Naive thymus-derived CD4-positive, alpha-beta T cell (primary cell): ENCODE measurements at regions of chr3 and their contacts with region 1.

Region 1: DNA sequence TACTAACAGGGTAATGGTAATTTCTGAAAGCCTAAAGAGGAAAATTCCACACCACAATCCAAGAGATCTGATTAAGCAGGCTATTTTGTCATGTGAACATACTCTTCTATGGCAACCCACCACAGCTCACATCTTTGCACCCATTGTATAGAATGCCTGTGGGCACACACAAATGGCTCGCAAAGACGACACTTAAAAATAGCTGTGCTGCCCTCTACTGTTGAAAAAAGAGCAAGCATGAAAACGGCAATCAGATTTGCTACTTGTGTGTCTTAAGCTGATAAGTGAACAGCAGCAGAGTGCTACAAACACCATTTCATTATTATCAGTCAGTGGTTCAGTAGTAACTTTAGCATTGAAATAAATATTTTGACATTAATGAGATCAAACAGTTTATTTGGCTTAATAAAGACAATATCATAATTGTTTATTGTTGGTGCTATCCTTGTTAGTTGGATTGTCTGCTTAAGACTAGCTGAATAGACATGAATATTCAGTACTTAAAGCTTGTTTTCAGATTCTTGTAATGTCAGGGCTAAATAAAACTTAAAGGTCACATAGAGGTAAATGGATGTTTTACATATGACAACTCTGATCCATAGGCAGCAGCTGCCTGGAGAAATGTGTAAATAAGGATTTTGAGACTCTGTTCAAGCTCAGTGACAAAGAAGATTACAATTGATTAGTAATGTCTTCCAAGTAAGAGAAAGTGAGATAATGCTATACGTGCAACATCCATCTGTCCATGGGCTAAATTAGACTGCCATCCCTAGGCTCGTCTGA is 199.1 kb downstream of the LRRN1 start:
- DNase-seq: peak in 5 of 9 donors; percentile 11 to 39 (median 24)
- ATAC-seq: peak; percentile 46
- H3K4me3 ChIP-seq: no peak overlapping the region
- H3K4me3 Mint-ChIP-seq: no peak overlapping the region
- H3K27ac ChIP-seq: no peak overlapping the region
- H3K27ac Mint-ChIP-seq: no peak overlapping the region
- H3K4me1 ChIP-seq: no peaks in the 10 kb centered on the region
- H3K4me1 Mint-ChIP-seq: no peaks in the 10 kb centered on the region
- H3K27me3 ChIP-seq: no peaks in the 10 kb centered on the region
- H3K27me3 Mint-ChIP-seq: peaks cover 0 to 3% (median 0%) of the 10 kb centered on the region in 5 donors

Region 2: GRCh38 chr3:3200632-3201212 is 797.6 kb before region 1 on chr3:
- CTCF ChIA-PET with region 1: interaction called, 28 read pairs
- POLR2A ChIA-PET with region 1: interaction called, 3 read pairs
- intact Hi-C with region 1: no loop called
- DNase-seq: peak in 5 of 9 donors; percentile 7 to 39 (median 28)
- ATAC-seq: peak; percentile 71
- H3K4me3 ChIP-seq: no peak overlapping the region
- H3K4me3 Mint-ChIP-seq: peak overlapping the region in 6 of 10 donors; percentile 36 to 76 (median 51)
- H3K27ac ChIP-seq: no peak overlapping the region
- H3K27ac Mint-ChIP-seq: peak overlapping the region in 1 of 9 donors; percentile 58
- H3K4me1 ChIP-seq: no peaks in the 10 kb centered on the region
- H3K4me1 Mint-ChIP-seq: peaks cover 8 to 27% (median 19%) of the 10 kb centered on the region in 7 donors
- H3K27me3 ChIP-seq: no peaks in the 10 kb centered on the region
- H3K27me3 Mint-ChIP-seq: peaks cover 0 to 8% (median 0%) of the 10 kb centered on the region in 5 donors

Region 3: DNA sequence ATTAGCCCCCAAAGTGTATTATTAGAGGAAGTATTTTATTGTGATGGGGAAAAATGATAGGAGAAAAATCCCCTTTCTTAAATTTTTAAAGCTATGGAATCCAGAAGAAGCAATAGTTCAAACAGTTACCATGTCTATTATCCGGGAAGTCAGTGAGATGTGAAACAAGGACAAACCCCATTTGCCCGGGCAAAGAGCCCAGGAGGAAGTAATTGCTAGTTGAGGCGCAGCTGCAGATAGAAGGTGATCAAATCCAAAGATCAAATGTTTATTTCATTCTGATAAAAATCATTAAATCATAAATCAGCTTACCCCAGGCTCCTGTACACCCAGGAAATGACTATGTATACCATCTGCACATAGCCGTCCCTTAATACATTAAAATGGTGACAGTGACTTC is 614.9 kb before region 1 on chr3:
- CTCF ChIA-PET with region 1: no interaction called
- POLR2A ChIA-PET with region 1: no interaction called
- intact Hi-C with region 1: no loop called
- DNase-seq: no peak
- ATAC-seq: no peak
- H3K4me3 ChIP-seq: no peak overlapping the region
- H3K4me3 Mint-ChIP-seq: no peak overlapping the region
- H3K27ac ChIP-seq: no peak overlapping the region
- H3K27ac Mint-ChIP-seq: no peak overlapping the region
- H3K4me1 ChIP-seq: no peaks in the 10 kb centered on the region
- H3K4me1 Mint-ChIP-seq: no peaks in the 10 kb centered on the region
- H3K27me3 ChIP-seq: no peaks in the 10 kb centered on the region
- H3K27me3 Mint-ChIP-seq: peaks cover 0 to 13% (median 4%) of the 10 kb centered on the region in 5 donors

Region 4: GRCh38 chr3:3726549-3726948 is 271.8 kb before region 1 on chr3:
- CTCF ChIA-PET with region 1: no interaction called
- POLR2A ChIA-PET with region 1: no interaction called
- intact Hi-C with region 1: no loop called
- DNase-seq: no peak
- ATAC-seq: no peak
- H3K4me3 ChIP-seq: no peak overlapping the region
- H3K4me3 Mint-ChIP-seq: no peak overlapping the region
- H3K27ac ChIP-seq: no peak overlapping the region
- H3K27ac Mint-ChIP-seq: no peak overlapping the region
- H3K4me1 ChIP-seq: no peaks in the 10 kb centered on the region
- H3K4me1 Mint-ChIP-seq: no peaks in the 10 kb centered on the region
- H3K27me3 ChIP-seq: no peaks in the 10 kb centered on the region
- H3K27me3 Mint-ChIP-seq: no peaks in the 10 kb centered on the region

Region 5: GRCh38 chr3:4447295-4447999 is 449.1 kb after region 1 on chr3:
- CTCF ChIA-PET with region 1: no interaction called
- POLR2A ChIA-PET with region 1: no interaction called
- intact Hi-C with region 1: no loop called
- DNase-seq: no peak
- ATAC-seq: no peak
- H3K4me3 ChIP-seq: no peak overlapping the region
- H3K4me3 Mint-ChIP-seq: no peak overlapping the region
- H3K27ac ChIP-seq: no peak overlapping the region
- H3K27ac Mint-ChIP-seq: no peak overlapping the region
- H3K4me1 ChIP-seq: no peaks in the 10 kb centered on the region
- H3K4me1 Mint-ChIP-seq: peaks cover 0 to 4% (median 0%) of the 10 kb centered on the region in 7 donors
- H3K27me3 ChIP-seq: no peaks in the 10 kb centered on the region
- H3K27me3 Mint-ChIP-seq: no peaks in the 10 kb centered on the region